Lower leg skin (tissue), 4 donors: ENCODE measurements at regions of chr1 and their contacts with region 1.

Region 1: GRCh38 chr1:238469146-238469631 is 578.5 kb upstream of the ZP4 start:
- DNase-seq: no peak
- H3K4me3 ChIP-seq: no peak overlapping the region
- CTCF ChIP-seq: no peak
- POLR2A ChIP-seq: no peak

Region 2: GRCh38 chr1:238281418-238281817 is 187.8 kb before region 1 on chr1:
- intact Hi-C with region 1: no loop called
- DNase-seq: no peak
- H3K4me3 ChIP-seq: no peak overlapping the region
- CTCF ChIP-seq: no peak
- POLR2A ChIP-seq: no peak

Region 3: GRCh38 chr1:240217403-240217802 is 1748.2 kb after region 1 on chr1:
- intact Hi-C with region 1: loop called (anchors 5 kb)
- DNase-seq: no peak
- H3K4me3 ChIP-seq: no peak overlapping the region
- CTCF ChIP-seq: no peak
- POLR2A ChIP-seq: no peak